ENCODE measurements at regions of chr2 and their contacts with region 1.

Region 1: GRCh38 chr2:135091681-135092080 is 39.6 kb downstream of the RAB3GAP1 start:
- DNase-seq: no peak
- H3K4me3 ChIP-seq: no peak overlapping the region
- H3K4me3 Mint-ChIP-seq: peak overlapping the region; percentile 23
- H3K27ac Mint-ChIP-seq: peak overlapping the region; percentile 47
- H3K4me1 ChIP-seq: peaks cover 44% of the 10 kb centered on the region
- H3K4me1 Mint-ChIP-seq: peaks cover 35% of the 10 kb centered on the region
- H3K27me3 ChIP-seq: no peaks in the 10 kb centered on the region
- H3K27me3 Mint-ChIP-seq: no peaks in the 10 kb centered on the region
- CTCF ChIP-seq: no peak

Region 2: GRCh38 chr2:135022952-135023880 is 68.5 kb before region 1 on chr2:
- CTCF ChIA-PET with region 1: no interaction called
- POLR2A ChIA-PET with region 1: no interaction called
- intact Hi-C with region 1: no loop called
- DNase-seq: no peak
- H3K4me3 ChIP-seq: no peak overlapping the region
- H3K4me3 Mint-ChIP-seq: no peak overlapping the region
- H3K27ac Mint-ChIP-seq: no peak overlapping the region
- H3K4me1 ChIP-seq: no peaks in the 10 kb centered on the region
- H3K4me1 Mint-ChIP-seq: no peaks in the 10 kb centered on the region
- H3K27me3 ChIP-seq: no peaks in the 10 kb centered on the region
- H3K27me3 Mint-ChIP-seq: peaks cover 7% of the 10 kb centered on the region
- CTCF ChIP-seq: no peak

Region 3: DNA sequence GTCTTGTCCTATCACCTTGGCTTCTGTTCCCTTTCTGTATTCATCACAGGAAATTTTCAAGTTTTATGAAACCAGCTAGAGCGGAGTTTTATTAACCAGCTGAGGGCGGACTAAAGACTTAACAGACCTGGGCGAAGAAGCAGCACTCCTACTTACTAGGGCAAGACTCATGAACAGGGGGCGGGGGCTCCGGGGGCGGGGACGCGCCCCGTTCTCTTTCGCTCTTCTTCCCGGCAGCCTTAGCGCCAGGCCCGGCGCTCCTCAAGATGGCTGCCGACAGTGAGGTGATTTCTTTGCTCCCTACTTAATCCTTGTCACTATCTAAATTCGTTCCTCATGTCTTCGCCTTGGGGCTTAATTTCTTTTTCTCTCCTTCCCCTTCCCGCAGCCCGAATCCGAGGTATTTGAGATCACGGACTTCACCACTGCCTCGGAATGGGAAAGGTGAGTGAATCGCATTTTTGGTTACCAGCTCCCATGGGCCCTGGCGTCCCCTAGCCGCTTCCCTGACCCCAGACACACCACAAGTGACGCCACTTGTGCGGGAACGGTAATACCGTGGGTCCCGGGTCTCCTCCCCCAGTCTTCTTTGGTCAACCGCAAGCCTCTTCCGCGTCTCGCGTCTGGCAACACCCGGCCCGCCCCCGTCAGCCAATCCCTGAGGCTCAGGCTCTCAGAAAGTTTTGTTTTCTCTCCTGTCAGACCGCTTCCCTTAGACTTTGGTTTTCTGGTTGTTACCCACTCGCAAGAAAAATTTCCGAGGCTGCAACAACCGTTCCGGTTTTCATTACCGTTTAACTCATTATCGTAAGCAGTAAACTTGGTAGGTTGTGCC is 39.4 kb before region 1 on chr2 and contains the start of gene RAB3GAP1:
- CTCF ChIA-PET with region 1: no interaction called
- POLR2A ChIA-PET with region 1: no interaction called
- intact Hi-C with region 1: loop called (anchors 2 kb)
- DNase-seq: peak; percentile 73 to 81
- H3K4me3 ChIP-seq: peak within 1 kb of the TSS; percentile 72
- H3K4me3 Mint-ChIP-seq: peak within 1 kb of the TSS; percentile 99
- H3K27ac Mint-ChIP-seq: peak within 1 kb of the TSS; percentile 100
- H3K4me1 ChIP-seq: peaks cover 5% of the 10 kb centered on the region; the same call in 1 of the 2 replicates
- H3K4me1 Mint-ChIP-seq: peaks cover 28% of the 10 kb centered on the region
- H3K27me3 ChIP-seq: no peaks in the 10 kb centered on the region
- H3K27me3 Mint-ChIP-seq: no peaks in the 10 kb centered on the region
- CTCF ChIP-seq: no peak
- total RNA-seq, gene RAB3GAP1: 41.5 and 43.1 TPM in 2 replicates